ENCODE measurements at regions of chr20 and their contacts with region 1.

Region 1: GRCh38 chr20:59743767-59744485 is 139.6 kb downstream of the PHACTR3 start:
- DNase-seq: peak; percentile 14
- H3K4me3 ChIP-seq: no peak overlapping the region
- H3K27ac ChIP-seq: no peak overlapping the region
- H3K4me1 ChIP-seq: peaks cover 13% of the 10 kb centered on the region
- H3K27me3 ChIP-seq: no peaks in the 10 kb centered on the region

Region 2: GRCh38 chr20:58447511-58448391 is 1296.2 kb before region 1 on chr20:
- in situ Hi-C with region 1: no loop called
- DNase-seq: peak; percentile 78
- H3K4me3 ChIP-seq: no peak overlapping the region
- H3K27ac ChIP-seq: no peak overlapping the region
- H3K4me1 ChIP-seq: no peaks in the 10 kb centered on the region
- H3K27me3 ChIP-seq: no peaks in the 10 kb centered on the region

Region 3: GRCh38 chr20:59583428-59584045 is 160.4 kb before region 1 on chr20:
- in situ Hi-C with region 1: loop called (anchors 10 kb)
- DNase-seq: peak; percentile 65
- H3K4me3 ChIP-seq: no peak overlapping the region
- H3K27ac ChIP-seq: no peak overlapping the region
- H3K4me1 ChIP-seq: peaks cover 4% of the 10 kb centered on the region; the same call in 1 of the 2 replicates
- H3K27me3 ChIP-seq: peaks cover 47% of the 10 kb centered on the region

Region 4: GRCh38 chr20:59848182-59848581 is 104.3 kb after region 1 on chr20:
- in situ Hi-C with region 1: no loop called
- DNase-seq: no peak
- H3K4me3 ChIP-seq: no peak overlapping the region
- H3K27ac ChIP-seq: no peak overlapping the region
- H3K4me1 ChIP-seq: no peaks in the 10 kb centered on the region
- H3K27me3 ChIP-seq: no peaks in the 10 kb centered on the region

Measured in GM23248 (cell line).